K562 (cell line): ENCODE measurements at regions of chr11 and their contacts with region 1.

Region 1: GRCh38 chr11:3854977-3855807 is at the start of gene STIM1:
- DNase-seq: peak; percentile 94 to 97 (median 96)
- ATAC-seq: peak; percentile 80
- H3K4me3 ChIP-seq: peak within 1 kb of the TSS; percentile 62
- H3K27ac ChIP-seq: peak within 1 kb of the TSS; percentile 86
- H3K4me1 ChIP-seq: peaks cover 42 to 44% of the 10 kb centered on the region in 2 experiments
- H3K27me3 ChIP-seq: no peaks in the 10 kb centered on the region
- CTCF ChIP-seq: peak; percentile 95 to 96 (median 95)
- EP300 ChIP-seq: peak; percentile 32; the same call in 1 of the 2 replicates
- POLR2A ChIP-seq: peak; percentile 72
- RAD21 ChIP-seq: peak; percentile 91 to 94
- polyA plus RNA-seq, gene STIM1: 7.7 to 8.0 TPM

Region 2: GRCh38 chr11:3803726-3804495 is 51.3 kb before region 1 on chr11:
- CTCF ChIA-PET with region 1: no interaction called
- POLR2A ChIA-PET with region 1: no interaction called
- in situ Hi-C with region 1: no loop called
- intact Hi-C with region 1: no loop called
- DNase-seq: no peak
- ATAC-seq: no peak
- H3K4me3 ChIP-seq: no peak overlapping the region
- H3K27ac ChIP-seq: no peak overlapping the region
- H3K4me1 ChIP-seq: peaks cover 6 to 15% of the 10 kb centered on the region in 2 experiments; a peak in 4 of 5 replicates
- H3K27me3 ChIP-seq: no peaks in the 10 kb centered on the region
- CTCF ChIP-seq: no peak
- EP300 ChIP-seq: no peak
- POLR2A ChIP-seq: no peak
- RAD21 ChIP-seq: no peak

Region 3: DNA sequence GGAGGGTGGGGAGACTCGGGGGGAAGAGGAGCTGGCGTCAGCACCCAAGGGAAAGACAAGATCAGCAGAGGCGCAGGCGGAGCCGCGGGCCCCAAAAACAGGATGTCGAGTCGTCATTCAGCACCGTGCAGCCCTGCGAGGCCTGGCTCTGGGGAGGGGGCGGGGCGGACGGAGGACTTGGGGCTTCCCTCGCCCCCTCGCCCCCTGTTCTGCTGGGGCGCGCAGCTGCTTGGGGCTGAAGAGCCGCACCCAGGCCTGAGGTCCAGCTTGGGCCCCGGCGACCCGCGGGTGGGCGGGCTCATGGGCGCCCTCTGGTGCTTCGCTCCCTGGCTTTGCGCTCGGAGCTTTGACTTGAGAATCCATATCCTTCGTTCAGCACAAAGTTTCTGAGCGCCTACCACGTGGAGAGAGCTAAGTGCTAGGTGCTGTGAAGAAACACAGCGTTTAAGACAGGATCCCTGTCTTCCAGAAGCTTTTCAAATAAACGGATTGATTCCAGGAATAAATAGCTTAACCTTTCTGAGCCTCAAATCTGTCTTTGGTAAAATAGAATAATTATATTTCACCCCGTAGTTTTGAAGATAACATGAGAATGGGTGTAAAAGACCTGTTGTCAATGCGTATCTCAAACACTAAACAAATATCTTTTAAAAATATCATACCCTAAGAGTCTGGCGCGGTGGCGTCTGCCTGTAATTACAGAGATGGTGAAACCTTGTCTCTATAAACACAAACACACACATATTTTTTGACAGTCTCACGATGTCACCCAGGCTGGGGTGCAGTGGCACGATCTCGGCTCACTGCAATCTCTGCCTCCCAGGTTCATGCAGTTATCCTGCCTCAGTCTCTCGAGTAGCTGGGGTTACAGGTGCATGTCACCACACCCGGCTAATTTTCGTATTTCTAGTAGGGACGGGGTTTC is 13.5 kb before region 1 on chr11:
- CTCF ChIA-PET with region 1: no interaction called
- POLR2A ChIA-PET with region 1: interaction called, 12 read pairs
- in situ Hi-C with region 1: no loop called
- intact Hi-C with region 1: no loop called
- DNase-seq: peak; percentile 79 to 94 (median 80)
- ATAC-seq: peak; percentile 67
- H3K4me3 ChIP-seq: peak overlapping the region; percentile 89
- H3K27ac ChIP-seq: peak overlapping the region; percentile 86
- H3K4me1 ChIP-seq: peaks cover 22 to 46% of the 10 kb centered on the region in 2 experiments
- H3K27me3 ChIP-seq: no peaks in the 10 kb centered on the region
- CTCF ChIP-seq: peak; percentile 86 to 95 (median 89)
- EP300 ChIP-seq: no peak; the same call in 1 of the 2 replicates
- POLR2A ChIP-seq: peak; percentile 52; the same call in 1 of the 2 replicates
- RAD21 ChIP-seq: peak; percentile 83 to 88

Region 4: DNA sequence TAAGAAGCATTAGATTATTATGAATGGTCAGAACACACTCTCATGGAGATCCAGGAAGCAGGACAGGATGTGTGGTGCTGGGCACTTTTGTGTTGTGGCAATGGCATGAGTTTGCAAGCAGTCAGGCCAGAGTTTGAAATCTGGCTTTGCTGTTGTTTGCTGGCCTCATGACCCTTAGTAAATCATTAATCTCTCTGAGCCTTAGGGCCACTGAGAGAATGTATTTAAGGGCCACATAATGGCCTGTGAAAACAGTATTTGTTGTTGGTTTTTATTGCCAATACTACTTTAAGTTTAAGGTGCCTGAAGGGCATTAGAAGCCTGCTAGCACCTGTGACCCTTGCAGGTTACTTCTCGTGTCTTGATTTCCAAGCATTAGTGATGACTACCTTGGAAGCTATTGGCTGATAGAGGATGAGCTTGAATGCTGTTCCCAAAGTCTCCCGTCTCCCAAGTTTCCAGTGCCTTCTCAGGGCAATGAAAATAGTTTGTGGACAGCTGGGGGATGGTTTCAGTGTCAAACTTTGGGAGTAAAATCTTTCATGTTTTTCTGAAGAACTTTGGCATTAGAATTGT is 24.9 kb after region 1 on chr11:
- CTCF ChIA-PET with region 1: no interaction called
- POLR2A ChIA-PET with region 1: interaction called, 8 read pairs
- in situ Hi-C with region 1: no loop called
- intact Hi-C with region 1: loop called (anchors 1 kb)
- DNase-seq: no peak
- ATAC-seq: no peak
- H3K4me3 ChIP-seq: no peak overlapping the region
- H3K27ac ChIP-seq: no peak overlapping the region; the same call in 2 of the 3 replicates
- H3K4me1 ChIP-seq: peaks cover 13 to 55% of the 10 kb centered on the region in 2 experiments
- H3K27me3 ChIP-seq: no peaks in the 10 kb centered on the region
- CTCF ChIP-seq: no peak
- EP300 ChIP-seq: no peak
- POLR2A ChIP-seq: no peak
- RAD21 ChIP-seq: no peak

Region 5: GRCh38 chr11:3920148-3920852 is 65.1 kb after region 1 on chr11:
- CTCF ChIA-PET with region 1: no interaction called
- POLR2A ChIA-PET with region 1: no interaction called
- in situ Hi-C with region 1: no loop called
- intact Hi-C with region 1: loop called (anchors 2 kb)
- DNase-seq: peak in 2 of 4 experiments; percentile 27 to 82
- ATAC-seq: peak; percentile 91
- H3K4me3 ChIP-seq: no peak overlapping the region
- H3K27ac ChIP-seq: peak overlapping the region; percentile 51; the same call in 2 of the 3 replicates
- H3K4me1 ChIP-seq: peaks cover under 1 to 9% of the 10 kb centered on the region in 2 experiments; a peak in 1 of 5 replicates
- H3K27me3 ChIP-seq: no peaks in the 10 kb centered on the region
- CTCF ChIP-seq: no peak
- EP300 ChIP-seq: peak; percentile 98
- POLR2A ChIP-seq: no peak
- RAD21 ChIP-seq: no peak; a peak in 1 of 4 replicates

Region 6: DNA sequence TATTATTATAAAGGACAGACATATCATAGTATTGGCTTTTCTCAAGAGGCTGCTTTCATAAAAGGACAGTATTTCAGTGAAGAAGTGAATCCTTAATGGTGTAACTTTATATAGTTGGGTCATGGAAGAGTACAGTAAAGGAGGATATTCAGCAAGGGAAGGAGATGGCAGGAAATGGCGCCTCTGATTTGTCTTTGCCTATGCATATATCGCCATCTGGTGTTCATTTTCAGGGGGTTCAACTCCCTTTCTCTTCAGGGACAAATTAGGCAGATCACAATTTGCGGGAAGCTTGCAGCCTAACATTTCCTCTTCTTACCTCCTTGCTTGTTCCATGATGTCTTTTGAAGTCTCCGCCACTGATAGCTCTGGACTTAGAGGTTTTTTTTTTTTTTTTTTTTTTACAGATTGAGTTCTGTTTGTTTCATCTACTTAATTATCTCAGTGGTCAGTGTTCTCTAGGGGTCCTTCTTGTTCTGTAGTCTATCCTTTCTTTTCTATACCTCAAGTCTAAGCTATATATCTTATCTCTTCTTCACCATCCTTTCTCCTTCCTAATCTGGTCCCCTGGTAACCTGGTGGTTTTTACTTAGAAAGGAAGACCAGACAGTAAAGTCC is 217.6 kb after region 1 on chr11:
- CTCF ChIA-PET with region 1: interaction called, 30 read pairs
- POLR2A ChIA-PET with region 1: interaction called, 13 read pairs
- in situ Hi-C with region 1: no loop called
- intact Hi-C with region 1: loop called (anchors 1 kb)
- DNase-seq: peak; percentile 69 to 82 (median 74)
- ATAC-seq: peak; percentile 97
- H3K4me3 ChIP-seq: no peak overlapping the region
- H3K27ac ChIP-seq: no peak overlapping the region
- H3K4me1 ChIP-seq: no peaks in the 10 kb centered on the region
- H3K27me3 ChIP-seq: no peaks in the 10 kb centered on the region
- CTCF ChIP-seq: peak; percentile 78 to 89 (median 78)
- EP300 ChIP-seq: no peak
- POLR2A ChIP-seq: no peak
- RAD21 ChIP-seq: peak; percentile 94 to 97